ENCODE measurements at regions of chr16 and their contacts with region 1.

Region 1: GRCh38 chr16:75160386-75160785 is 12.1 kb downstream of the ZFP1 start:
- DNase-seq: no peak
- H3K4me3 ChIP-seq: no peak overlapping the region
- H3K27ac ChIP-seq: no peak overlapping the region
- H3K4me1 ChIP-seq: no peaks in the 10 kb centered on the region
- H3K27me3 ChIP-seq: no peaks in the 10 kb centered on the region
- CTCF ChIP-seq: no peak
- EP300 ChIP-seq: no peak
- POLR2A ChIP-seq: no peak

Region 2: GRCh38 chr16:75029557-75030253 is 130.7 kb before region 1 on chr16:
- intact Hi-C with region 1: no loop called
- DNase-seq: no peak
- H3K4me3 ChIP-seq: no peak overlapping the region
- H3K27ac ChIP-seq: no peak overlapping the region
- H3K4me1 ChIP-seq: peaks cover 6% of the 10 kb centered on the region
- H3K27me3 ChIP-seq: no peaks in the 10 kb centered on the region
- CTCF ChIP-seq: no peak
- EP300 ChIP-seq: no peak
- POLR2A ChIP-seq: no peak

Region 3: DNA sequence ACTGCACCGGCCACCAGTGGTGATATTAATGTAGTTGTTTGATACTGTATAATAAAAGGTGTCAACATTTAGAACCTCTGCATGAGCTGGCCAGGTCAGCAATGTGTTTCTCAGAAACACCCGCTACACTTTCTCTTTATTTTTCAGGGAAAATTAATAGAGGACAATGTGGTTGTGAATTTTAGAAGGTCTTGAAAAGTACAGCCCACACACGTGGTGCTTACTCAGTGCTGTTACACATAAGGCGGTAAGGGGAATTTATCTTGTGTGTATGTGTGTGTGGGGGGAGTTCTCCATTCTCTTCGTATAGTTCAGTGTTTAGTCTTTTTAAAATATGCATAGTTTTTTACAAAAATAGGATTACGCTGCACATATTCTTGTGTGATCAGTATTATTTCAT is 16.4 kb before region 1 on chr16:
- intact Hi-C with region 1: loop called in 1 of 4 experiments (anchors 1 kb)
- DNase-seq: no peak
- H3K4me3 ChIP-seq: no peak overlapping the region
- H3K27ac ChIP-seq: no peak overlapping the region
- H3K4me1 ChIP-seq: no peaks in the 10 kb centered on the region
- H3K27me3 ChIP-seq: no peaks in the 10 kb centered on the region
- CTCF ChIP-seq: no peak
- EP300 ChIP-seq: no peak
- POLR2A ChIP-seq: no peak

Measured in ovary (tissue), 10 donors.